Astrocyte of the cerebellum (primary cell): ENCODE measurements at regions of chr17 and their contacts with region 1.

Region 1: GRCh38 chr17:54749157-54749556 is 151.5 kb upstream of the TOM1L1 start:
- DNase-seq: no peak
- H3K4me3 ChIP-seq: no peak overlapping the region
- CTCF ChIP-seq: no peak

Region 2: DNA sequence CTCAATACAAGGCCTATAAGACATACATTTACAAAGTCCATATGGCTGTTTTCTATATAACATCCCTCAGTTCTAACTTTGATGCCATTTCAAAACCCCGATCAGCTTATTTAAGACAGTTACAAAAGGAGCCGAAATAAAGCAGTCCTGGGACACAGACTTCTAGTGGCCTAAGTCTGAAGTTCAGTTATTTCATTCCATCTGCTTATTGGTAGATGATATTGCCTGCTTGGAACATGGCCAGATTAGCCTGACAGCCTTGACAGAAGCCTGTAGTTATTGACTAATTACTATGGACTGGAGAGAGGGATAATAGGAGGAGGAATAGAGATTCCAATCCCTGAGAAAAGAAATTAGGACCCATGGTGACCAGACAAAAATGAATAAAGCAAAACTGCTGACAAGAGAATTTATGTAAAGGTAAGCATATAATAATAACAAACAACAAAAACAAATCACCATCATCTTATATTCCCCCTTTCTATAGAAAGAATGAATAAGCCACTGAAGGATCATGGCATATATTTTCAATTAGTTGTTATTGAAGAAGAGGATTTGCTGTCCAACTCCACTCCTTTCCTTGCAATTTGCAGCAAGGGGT is 54.8 kb before region 1 on chr17:
- in situ Hi-C with region 1: no loop called
- DNase-seq: no peak
- H3K4me3 ChIP-seq: no peak overlapping the region
- CTCF ChIP-seq: no peak

Region 3: DNA sequence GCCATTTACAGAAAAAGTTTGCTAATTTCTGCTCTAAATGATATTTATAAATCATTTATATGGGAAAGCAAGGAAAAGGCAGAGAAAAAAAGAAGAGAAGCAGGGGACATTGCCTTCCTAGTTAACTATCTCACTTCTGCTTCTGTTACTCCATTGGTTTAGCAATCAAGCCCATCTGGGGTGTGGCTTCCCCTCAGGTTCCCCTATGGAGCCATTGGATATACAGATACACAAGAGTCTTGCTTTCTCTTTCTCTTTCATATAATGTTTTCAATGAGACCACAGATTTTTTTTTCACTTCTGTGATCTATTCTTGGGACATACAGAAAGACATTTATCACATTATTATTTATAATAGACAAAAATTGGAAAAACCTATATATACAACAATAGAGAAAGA is 45.9 kb after region 1 on chr17:
- in situ Hi-C with region 1: loop called (anchors 5 kb)
- DNase-seq: no peak
- H3K4me3 ChIP-seq: no peak overlapping the region
- CTCF ChIP-seq: no peak

Region 4: GRCh38 chr17:54813896-54814295 is 64.7 kb after region 1 on chr17:
- in situ Hi-C with region 1: no loop called
- DNase-seq: no peak
- H3K4me3 ChIP-seq: no peak overlapping the region
- CTCF ChIP-seq: no peak

Region 5: GRCh38 chr17:55157136-55157535 is 408.0 kb after region 1 on chr17:
- in situ Hi-C with region 1: no loop called
- DNase-seq: peak; percentile 84
- H3K4me3 ChIP-seq: no peak overlapping the region
- CTCF ChIP-seq: no peak